CD4-positive, alpha-beta memory T cell (primary cell): ENCODE measurements at regions of chr6 and their contacts with region 1.

Region 1: DNA sequence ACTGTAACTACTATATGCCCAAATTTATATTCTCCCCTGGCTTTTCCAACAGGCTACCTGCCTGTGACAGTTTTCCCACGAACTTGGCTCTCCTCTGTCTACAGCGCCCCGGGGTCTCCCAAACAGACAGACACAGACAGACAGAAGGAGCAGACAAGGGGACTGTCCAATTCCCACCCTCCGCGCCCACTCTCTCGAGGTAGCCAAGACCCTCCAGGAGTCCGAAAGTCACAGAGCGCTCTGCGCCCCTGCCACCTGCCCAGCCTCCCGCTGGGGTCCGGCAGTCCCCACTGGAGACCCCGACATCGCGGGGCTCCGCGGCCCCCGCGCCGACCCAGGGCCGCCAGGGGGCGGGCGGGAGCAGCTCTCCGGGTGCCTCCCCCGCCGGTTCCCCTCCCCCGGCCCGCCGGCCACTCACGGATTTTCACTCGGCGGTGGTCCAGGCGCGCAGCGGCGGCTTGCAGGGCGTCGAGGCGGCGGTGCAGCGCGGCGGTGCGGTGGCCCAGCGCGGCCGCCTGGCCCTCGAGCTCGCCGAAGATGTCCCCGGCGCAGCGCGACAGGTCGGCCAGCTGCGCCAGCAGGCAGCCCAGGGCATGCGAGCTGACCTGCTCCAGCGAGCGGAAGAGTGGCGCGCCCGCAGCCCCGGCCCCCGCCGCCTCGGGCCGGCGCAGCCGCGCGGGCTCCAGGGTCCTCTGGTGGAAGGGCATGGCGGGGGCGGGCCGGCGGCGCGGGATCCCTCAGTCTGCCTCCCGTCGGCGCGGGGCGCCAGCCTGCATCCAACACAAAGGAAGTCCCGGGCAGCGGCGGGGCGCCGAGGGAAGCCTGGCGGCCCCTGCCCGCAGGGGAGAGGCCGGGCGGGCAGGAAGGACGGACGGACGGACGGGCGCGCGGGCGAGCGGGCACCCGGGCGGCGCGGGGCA is 81.3 kb upstream of the CCDC28A start:
- DNase-seq: peak; percentile 35 to 65 (median 37)
- H3K4me3 ChIP-seq: peak overlapping the region in 1 of 2 donors; percentile 24
- H3K4me3 Mint-ChIP-seq: peak overlapping the region; percentile 77 to 87 (median 84)
- H3K27ac ChIP-seq: no peak overlapping the region
- H3K27ac Mint-ChIP-seq: peak overlapping the region in 3 of 7 donors; percentile 12 to 72 (median 32)
- H3K4me1 ChIP-seq: peaks cover 6% of the 10 kb centered on the region
- H3K4me1 Mint-ChIP-seq: peaks cover 3 to 15% (median 8%) of the 10 kb centered on the region in 4 donors
- H3K27me3 ChIP-seq: peaks cover 6% of the 10 kb centered on the region
- H3K27me3 Mint-ChIP-seq: peaks cover 13 to 15% of the 10 kb centered on the region in 2 donors

Region 2: GRCh38 chr6:137661601-137662000 is 1030.7 kb before region 1 on chr6:
- CTCF ChIA-PET with region 1: no interaction called
- POLR2A ChIA-PET with region 1: no interaction called
- intact Hi-C with region 1: no loop called
- DNase-seq: peak in 3 of 5 donors; percentile 40 to 45 (median 45)
- H3K4me3 ChIP-seq: no peak overlapping the region
- H3K4me3 Mint-ChIP-seq: no peak overlapping the region
- H3K27ac ChIP-seq: no peak overlapping the region
- H3K27ac Mint-ChIP-seq: peak overlapping the region in 1 of 7 donors; percentile 51
- H3K4me1 ChIP-seq: no peaks in the 10 kb centered on the region
- H3K4me1 Mint-ChIP-seq: peaks cover 0 to 3% (median under 1%) of the 10 kb centered on the region in 4 donors
- H3K27me3 ChIP-seq: no peaks in the 10 kb centered on the region
- H3K27me3 Mint-ChIP-seq: peaks cover 0 to 4% of the 10 kb centered on the region in 2 donors

Region 3: GRCh38 chr6:138765896-138766655 is 73.8 kb after region 1 on chr6:
- CTCF ChIA-PET with region 1: interaction called, 11 read pairs
- POLR2A ChIA-PET with region 1: interaction called, 3 read pairs
- intact Hi-C with region 1: loop called (anchors 1 kb)
- DNase-seq: peak in 4 of 5 donors; percentile 31 to 36 (median 34)
- H3K4me3 ChIP-seq: no peak overlapping the region
- H3K4me3 Mint-ChIP-seq: no peak overlapping the region
- H3K27ac ChIP-seq: no peak overlapping the region
- H3K27ac Mint-ChIP-seq: no peak overlapping the region
- H3K4me1 ChIP-seq: no peaks in the 10 kb centered on the region
- H3K4me1 Mint-ChIP-seq: no peaks in the 10 kb centered on the region
- H3K27me3 ChIP-seq: no peaks in the 10 kb centered on the region
- H3K27me3 Mint-ChIP-seq: peaks cover 0 to 2% of the 10 kb centered on the region in 2 donors

Region 4: GRCh38 chr6:139134817-139135581 is 442.7 kb after region 1 on chr6 and contains the start of gene HECA:
- CTCF ChIA-PET with region 1: no interaction called
- POLR2A ChIA-PET with region 1: no interaction called
- intact Hi-C with region 1: no loop called
- DNase-seq: peak; percentile 98 to 100 (median 99)
- H3K4me3 ChIP-seq: peak within 1 kb of the TSS; percentile 75 to 95
- H3K4me3 Mint-ChIP-seq: peak within 1 kb of the TSS; percentile 90 to 98 (median 95)
- H3K27ac ChIP-seq: peak within 1 kb of the TSS; percentile 97
- H3K27ac Mint-ChIP-seq: peak within 1 kb of the TSS; percentile 98 to 100 (median 99)
- H3K4me1 ChIP-seq: peaks cover 60% of the 10 kb centered on the region
- H3K4me1 Mint-ChIP-seq: peaks cover 48 to 84% (median 57%) of the 10 kb centered on the region in 4 donors
- H3K27me3 ChIP-seq: no peaks in the 10 kb centered on the region
- H3K27me3 Mint-ChIP-seq: no peaks in the 10 kb centered on the region
- total RNA-seq, gene HECA: 154 to 161 TPM